Sciatic nerve (tissue), 2 donors: ENCODE measurements at regions of chr17 and their contacts with region 1.

Region 1: DNA sequence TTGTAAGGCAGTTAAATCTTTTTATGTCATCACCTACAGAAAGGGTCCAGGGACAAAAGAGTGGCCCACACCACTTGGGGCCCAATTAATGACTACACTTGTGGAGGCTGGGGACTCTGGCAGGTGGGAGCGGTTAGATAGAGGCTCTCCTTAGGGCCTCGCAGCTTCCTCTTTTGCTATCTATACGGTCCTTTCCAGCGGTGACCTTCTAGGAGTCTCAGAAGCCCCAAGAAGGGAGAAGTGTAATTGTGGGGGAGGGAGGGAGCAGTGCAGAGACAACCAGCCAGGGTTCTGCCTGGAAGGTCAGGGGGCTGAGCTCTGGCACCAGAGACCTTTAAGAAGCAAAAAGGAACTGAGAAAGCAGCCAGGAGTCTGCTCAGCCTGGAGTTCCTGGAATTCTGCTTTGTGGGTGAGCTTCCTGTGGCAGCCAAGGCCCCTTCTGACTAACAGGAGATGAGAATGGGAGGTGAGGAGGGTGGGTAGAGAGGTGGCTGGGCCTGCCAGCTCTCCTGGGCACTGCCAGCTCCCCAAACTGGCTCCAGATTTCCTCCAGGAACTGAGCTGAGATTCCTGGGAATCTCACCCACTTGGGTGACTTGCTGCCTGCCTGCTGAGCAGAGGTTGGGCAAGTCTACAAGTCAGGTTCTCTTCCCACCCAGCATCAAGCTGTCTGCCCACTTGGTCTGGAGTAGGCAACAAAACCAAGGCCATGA is 16.3 kb upstream of the MAP3K14 start:
- DNase-seq: peak; percentile 39
- ATAC-seq: no peak

Region 2: GRCh38 chr17:45228763-45229539 is 104.2 kb before region 1 on chr17:
- intact Hi-C with region 1: no loop called
- DNase-seq: peak; percentile 87
- ATAC-seq: peak; percentile 88

Region 3: DNA sequence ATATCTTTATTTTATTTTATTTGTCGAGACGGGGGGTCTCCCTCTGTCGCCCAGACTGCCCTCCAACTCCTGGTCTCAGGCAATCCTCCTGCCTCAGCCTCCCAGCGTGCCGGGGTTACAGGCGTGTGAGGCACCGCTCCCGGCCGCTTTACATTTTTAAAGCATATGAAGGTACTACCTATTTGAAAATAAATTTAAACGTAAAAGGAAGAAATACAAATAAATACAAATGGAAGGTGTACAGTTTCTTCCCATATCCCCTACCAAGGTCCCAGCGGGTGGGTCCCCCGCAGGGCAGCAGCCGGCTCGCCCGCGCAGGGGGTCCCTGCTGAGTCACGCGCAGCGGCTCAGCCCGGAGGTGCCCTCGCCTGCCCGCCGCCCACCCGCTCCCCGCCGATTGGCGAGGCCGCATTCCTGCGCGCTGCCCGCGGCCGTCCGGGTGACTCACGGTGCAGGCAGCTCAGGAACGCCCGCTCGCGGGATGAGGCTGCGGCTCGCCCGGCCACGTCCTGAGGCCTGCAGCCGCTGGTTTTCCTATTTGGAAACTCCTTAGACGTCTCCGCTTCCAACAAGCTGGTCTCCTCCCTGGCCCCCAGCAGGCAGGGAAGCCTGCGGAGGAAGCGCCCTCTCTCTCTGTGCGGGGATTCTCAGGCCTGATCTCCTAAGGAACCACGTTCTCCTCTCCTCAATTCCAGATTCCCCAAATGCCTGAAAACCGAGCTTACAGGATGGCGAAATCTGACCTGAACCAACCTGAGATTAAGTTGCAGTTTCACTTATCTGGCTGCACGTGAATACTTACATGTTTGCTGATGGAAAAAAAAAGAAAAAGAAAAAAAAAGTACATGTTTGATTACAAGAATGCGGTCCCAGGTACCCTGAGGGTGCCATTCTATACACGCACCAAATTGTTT is 38.5 kb after region 1 on chr17:
- intact Hi-C with region 1: loop called (anchors 1 kb)
- DNase-seq: peak; percentile 87
- ATAC-seq: peak; percentile 94